GM12878 (cell line): ENCODE measurements at regions of chr11 and their contacts with region 1.

Region 1: GRCh38 chr11:87114093-87114492 is 76.4 kb downstream of the TMEM135 start:
- DNase-seq: no peak
- ATAC-seq: no peak
- H3K4me3 ChIP-seq: no peak overlapping the region
- H3K27ac ChIP-seq: no peak overlapping the region
- H3K4me1 ChIP-seq: no peaks in the 10 kb centered on the region
- H3K27me3 ChIP-seq: no peaks in the 10 kb centered on the region
- CTCF ChIP-seq: no peak
- EP300 ChIP-seq: no peak
- POLR2A ChIP-seq: no peak
- RAD21 ChIP-seq: no peak

Region 2: GRCh38 chr11:87125257-87125656 is 11.2 kb after region 1 on chr11:
- CTCF ChIA-PET with region 1: interaction called, 5 read pairs
- POLR2A ChIA-PET with region 1: no interaction called
- RAD21 ChIA-PET with region 1: no interaction called
- SMC1A ChIA-PET with region 1: interaction called, 10 read pairs
- in situ Hi-C with region 1: no loop called
- intact Hi-C with region 1: no loop called
- DNase-seq: no peak
- ATAC-seq: no peak
- H3K4me3 ChIP-seq: no peak overlapping the region
- H3K27ac ChIP-seq: no peak overlapping the region
- H3K4me1 ChIP-seq: no peaks in the 10 kb centered on the region
- H3K27me3 ChIP-seq: no peaks in the 10 kb centered on the region
- CTCF ChIP-seq: no peak
- EP300 ChIP-seq: no peak
- POLR2A ChIP-seq: no peak
- RAD21 ChIP-seq: no peak